ENCODE measurements at regions of chr13 and their contacts with region 1.

Region 1: GRCh38 chr13:91722267-91722884 is 324.0 kb downstream of the GPC5 start:
- DNase-seq: no peak
- H3K4me3 ChIP-seq: no peak overlapping the region
- H3K27ac ChIP-seq: no peak overlapping the region
- H3K4me1 ChIP-seq: peaks cover 0 to 3% (median 0%) of the 10 kb centered on the region in 4 donors
- H3K27me3 ChIP-seq: no peaks in the 10 kb centered on the region
- CTCF ChIP-seq: peak; percentile 63 to 70 (median 67)
- EP300 ChIP-seq: no peak
- POLR2A ChIP-seq: no peak

Region 2: DNA sequence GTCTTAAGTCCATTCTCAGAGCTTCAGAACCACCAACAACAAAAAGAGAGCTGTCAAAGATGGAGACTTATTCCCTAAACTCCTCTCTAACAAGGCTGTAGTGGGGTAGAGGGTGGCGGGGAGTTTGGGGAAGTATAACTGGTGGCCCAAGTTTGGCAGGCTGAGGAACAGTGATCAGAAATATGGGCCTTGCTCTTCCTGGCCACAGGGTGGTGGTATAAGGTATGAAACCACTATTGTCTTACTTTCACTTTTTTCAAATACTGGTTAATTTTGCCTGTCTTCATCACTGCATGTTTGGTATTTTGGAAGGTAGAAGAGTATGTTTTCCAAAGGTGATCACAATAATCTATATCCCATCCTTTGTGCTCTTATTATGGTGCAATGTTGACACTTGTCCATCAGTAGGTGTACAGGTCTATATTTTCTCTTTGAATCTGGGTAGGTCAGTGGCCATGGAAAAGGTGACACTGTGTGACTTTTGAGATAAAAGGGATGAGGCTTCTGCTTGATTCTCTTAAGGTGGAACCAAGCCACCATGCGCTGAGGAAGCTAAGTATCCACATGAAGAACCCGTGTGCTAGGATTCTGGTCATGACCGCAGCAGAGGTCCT is 347.2 kb before region 1 on chr13:
- in situ Hi-C with region 1: loop called in 3 of 4 experiments (anchors 10 to 25 kb)
- intact Hi-C with region 1: no loop called
- DNase-seq: no peak
- H3K4me3 ChIP-seq: no peak overlapping the region
- H3K27ac ChIP-seq: no peak overlapping the region
- H3K4me1 ChIP-seq: no peaks in the 10 kb centered on the region
- H3K27me3 ChIP-seq: no peaks in the 10 kb centered on the region
- CTCF ChIP-seq: peak; percentile 23 to 44 (median 32)
- EP300 ChIP-seq: no peak
- POLR2A ChIP-seq: no peak

Region 3: DNA sequence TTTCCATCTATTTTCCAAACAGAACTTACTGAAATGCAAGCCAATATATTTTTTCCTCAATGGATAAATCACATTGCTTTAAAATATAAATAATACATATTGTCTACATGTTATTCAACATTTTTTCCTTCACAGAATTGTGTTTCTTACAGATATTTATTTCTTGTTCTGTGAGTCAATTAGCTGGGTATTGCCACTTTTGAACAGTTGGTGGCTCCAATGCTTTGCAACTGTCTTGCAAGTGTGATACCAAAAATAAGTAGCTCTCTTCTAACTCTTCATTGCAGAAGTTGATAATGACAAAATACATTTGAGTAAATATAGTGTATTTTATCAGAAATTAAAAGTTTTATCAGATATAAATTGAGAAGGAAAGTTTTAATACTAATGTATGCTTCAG is 341.0 kb before region 1 on chr13:
- in situ Hi-C with region 1: loop called in 3 of 4 experiments (anchors 10 to 25 kb)
- intact Hi-C with region 1: no loop called
- DNase-seq: no peak
- H3K4me3 ChIP-seq: no peak overlapping the region
- H3K27ac ChIP-seq: no peak overlapping the region
- H3K4me1 ChIP-seq: no peaks in the 10 kb centered on the region
- H3K27me3 ChIP-seq: peaks cover 14% of the 10 kb centered on the region
- CTCF ChIP-seq: peak in 4 of 5 experiments; percentile 10 to 31 (median 20)
- EP300 ChIP-seq: no peak
- POLR2A ChIP-seq: no peak

Region 4: DNA sequence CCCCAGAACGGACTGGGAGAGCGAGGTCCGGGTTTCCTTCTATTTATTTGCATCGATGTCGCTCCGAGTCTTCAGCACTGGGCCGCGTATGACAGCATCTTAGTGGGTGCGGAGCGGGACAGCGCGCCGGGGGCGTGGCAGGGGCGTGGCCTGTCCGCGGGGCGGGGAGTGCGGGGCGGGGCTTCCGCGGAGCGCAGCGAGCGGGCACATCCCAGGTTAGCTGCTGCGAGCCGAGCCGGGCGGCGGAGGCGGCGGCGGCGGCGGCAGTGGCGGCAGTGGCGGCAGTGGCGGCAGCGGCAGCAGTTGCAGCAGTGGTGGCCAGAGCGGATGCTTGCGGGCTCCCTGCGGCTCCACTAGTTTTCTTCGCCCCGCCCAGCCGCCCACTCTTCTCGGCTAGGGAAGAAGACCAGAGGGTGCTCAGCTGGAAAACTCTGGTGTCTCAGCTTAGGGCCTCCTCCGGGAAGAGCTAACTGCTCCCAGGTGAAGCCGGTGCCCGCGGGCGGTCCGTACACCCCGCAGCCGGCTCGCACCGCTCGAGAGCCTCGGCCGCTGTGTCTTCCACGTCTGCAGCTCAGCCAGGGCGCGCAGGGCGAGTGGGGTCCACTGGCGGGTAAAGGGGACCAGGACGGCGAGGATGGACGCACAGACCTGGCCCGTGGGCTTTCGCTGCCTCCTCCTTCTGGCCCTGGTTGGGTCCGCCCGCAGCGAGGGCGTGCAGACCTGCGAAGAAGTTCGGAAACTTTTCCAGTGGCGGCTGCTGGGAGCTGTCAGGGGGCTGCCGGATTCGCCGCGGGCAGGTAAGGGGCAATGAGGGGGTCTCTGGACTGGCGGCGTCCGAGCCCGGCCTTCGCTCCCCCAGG is 323.7 kb before region 1 on chr13 and contains the start of gene GPC5:
- in situ Hi-C with region 1: loop called in 1 of 4 experiments (anchors 25 kb)
- intact Hi-C with region 1: no loop called
- DNase-seq: peak; percentile 85
- H3K4me3 ChIP-seq: peak within 1 kb of the TSS; percentile 11 to 56 (median 32)
- H3K27ac ChIP-seq: no peak within 1 kb of the TSS
- H3K4me1 ChIP-seq: peaks cover 5 to 13% (median 10%) of the 10 kb centered on the region in 4 donors
- H3K27me3 ChIP-seq: peaks cover 84% of the 10 kb centered on the region
- CTCF ChIP-seq: no peak
- EP300 ChIP-seq: no peak
- POLR2A ChIP-seq: no peak
- total RNA-seq, gene GPC5: 0.48 to 1.4 TPM in 2 of 4 donors, not detected in the others